ENCODE measurements at regions of chr15 and their contacts with region 1.

Region 1: DNA sequence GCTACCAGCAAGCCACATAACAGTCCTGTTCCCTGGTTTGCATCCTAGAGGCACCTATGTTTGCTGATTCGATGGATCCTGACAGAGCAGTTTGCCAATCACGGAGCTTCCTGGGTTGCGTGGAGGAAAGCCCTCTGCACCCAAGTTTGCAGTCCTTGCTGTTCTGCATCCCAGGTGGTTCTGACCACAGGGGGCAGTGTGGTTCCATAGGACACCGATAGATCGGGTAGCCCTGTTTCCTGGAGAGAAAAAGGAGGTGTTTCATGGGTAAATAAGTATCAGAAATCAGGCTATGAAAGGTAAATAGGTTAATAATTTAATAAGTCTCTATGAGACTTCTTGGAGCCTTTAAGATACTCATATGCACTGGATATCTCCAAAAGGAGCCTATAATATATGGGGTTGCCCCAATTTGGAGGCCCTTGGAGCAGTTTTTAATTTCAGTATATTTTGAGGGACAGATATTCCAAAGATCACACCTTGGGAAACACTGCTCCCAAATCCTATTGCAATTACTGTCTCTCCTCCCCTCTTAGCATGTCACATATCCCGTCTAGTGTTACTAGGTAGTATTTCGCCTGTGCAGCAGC is 194.6 kb upstream of the TPM1 start:
- DNase-seq: peak; percentile 90
- H3K4me3 ChIP-seq: no peak overlapping the region
- H3K27ac ChIP-seq: peak overlapping the region; percentile 44 to 82 (median 64)
- H3K4me1 ChIP-seq: peaks cover 0 to 62% (median 38%) of the 10 kb centered on the region in 4 donors
- H3K27me3 ChIP-seq: no peaks in the 10 kb centered on the region
- CTCF ChIP-seq: peak; percentile 56 to 84 (median 64)
- EP300 ChIP-seq: no peak
- POLR2A ChIP-seq: no peak

Region 2: GRCh38 chr15:62899090-62899493 is 51.1 kb after region 1 on chr15:
- intact Hi-C with region 1: loop called (anchors 2 kb)
- DNase-seq: peak; percentile 93
- H3K4me3 ChIP-seq: no peak overlapping the region
- H3K27ac ChIP-seq: peak overlapping the region; percentile 85 to 96 (median 90)
- H3K4me1 ChIP-seq: peaks cover 0 to 76% (median 71%) of the 10 kb centered on the region in 4 donors
- H3K27me3 ChIP-seq: no peaks in the 10 kb centered on the region
- CTCF ChIP-seq: no peak
- EP300 ChIP-seq: peak; percentile 99 to 100 (median 100)
- POLR2A ChIP-seq: no peak

Region 3: DNA sequence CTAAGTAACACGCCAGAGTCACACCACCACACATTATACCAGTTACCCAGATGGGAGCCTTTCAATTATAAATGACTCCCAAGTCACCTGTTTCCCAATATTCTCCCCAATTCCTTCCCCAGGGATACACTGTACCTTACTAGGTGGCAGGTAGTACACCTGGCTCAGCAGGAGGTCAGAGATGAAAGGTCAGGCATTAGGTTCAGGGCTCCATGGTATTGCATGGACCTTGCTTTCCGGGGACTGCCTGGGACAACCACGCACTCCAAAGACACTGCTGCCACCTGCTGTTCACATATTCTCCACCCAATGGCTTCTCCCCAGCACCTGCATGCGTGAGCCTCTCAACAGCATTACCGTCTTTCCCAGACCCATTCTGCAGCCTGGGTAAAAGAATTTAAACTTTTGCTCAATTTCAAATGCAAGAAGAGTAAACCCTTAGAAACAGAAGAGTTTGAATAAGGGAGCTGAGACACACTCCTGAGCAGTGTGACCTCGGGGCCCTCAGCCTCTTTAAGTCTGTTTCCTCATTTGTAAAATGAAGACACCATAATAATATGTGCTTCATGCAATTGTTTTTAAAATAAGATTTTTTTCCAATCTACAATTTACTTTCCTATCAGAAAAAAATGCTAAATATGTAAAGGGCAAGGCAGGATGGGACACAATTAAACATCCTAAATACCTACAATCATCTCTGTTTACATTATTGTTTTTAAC is 245.7 kb after region 1 on chr15:
- intact Hi-C with region 1: loop called (anchors 1 kb)
- DNase-seq: peak; percentile 90
- H3K4me3 ChIP-seq: no peak overlapping the region
- H3K27ac ChIP-seq: peak overlapping the region; percentile 51 to 71 (median 69)
- H3K4me1 ChIP-seq: peaks cover 0 to 31% (median 29%) of the 10 kb centered on the region in 4 donors
- H3K27me3 ChIP-seq: no peaks in the 10 kb centered on the region
- CTCF ChIP-seq: peak; percentile 71 to 92 (median 86)
- EP300 ChIP-seq: no peak
- POLR2A ChIP-seq: no peak